ENCODE measurements at regions of chr18 and their contacts with region 1.

Region 1: GRCh38 chr18:35513181-35513936 is 15.6 kb upstream of the INO80C start:
- H3K4me3 ChIP-seq: no peak overlapping the region
- H3K27ac ChIP-seq: no peak overlapping the region
- H3K4me1 ChIP-seq: no peaks in the 10 kb centered on the region
- CTCF ChIP-seq: no peak

Region 2: DNA sequence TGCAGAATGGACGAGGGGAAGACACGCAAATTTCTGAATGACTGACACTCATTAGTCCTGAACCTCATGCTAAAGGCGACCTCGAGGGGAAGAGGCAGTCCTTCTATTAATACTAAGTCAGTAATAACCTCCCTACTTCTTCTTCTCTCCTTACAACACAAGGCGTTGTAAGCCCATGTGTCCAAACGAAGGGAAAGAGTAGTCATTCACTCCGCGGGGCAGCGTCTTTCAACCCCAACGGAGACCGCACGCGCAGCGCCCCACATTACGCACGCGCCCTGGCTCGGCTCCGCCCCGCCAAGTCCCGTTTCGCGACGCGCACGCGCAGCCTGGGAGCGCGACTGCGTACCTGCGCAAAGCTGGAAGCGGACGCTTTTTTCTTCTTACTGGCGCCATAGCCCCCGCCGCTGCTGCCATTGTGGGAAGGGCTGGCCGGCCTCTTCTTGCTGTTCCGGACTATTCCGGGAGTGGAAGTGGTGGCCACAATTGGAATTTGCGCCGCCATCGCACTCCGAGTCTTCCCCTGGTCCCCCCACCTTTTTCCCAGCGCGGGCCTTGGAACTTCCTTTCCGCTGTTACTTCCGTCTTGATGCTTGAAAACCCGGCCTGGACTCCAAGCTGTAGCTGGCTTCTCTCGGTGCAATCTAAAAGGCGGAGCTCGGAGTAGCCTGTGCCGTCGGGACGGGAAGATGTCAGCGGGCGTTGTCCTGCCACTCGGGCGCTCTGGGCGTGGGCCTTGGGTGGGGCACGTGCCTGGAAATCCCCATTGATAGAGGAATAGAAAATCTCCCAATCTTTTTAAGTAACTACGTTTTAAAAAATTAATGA is 15.8 kb before region 1 on chr18 and contains the start of gene INO80C:
- CTCF ChIA-PET with region 1: no interaction called
- POLR2A ChIA-PET with region 1: interaction called, 10 read pairs
- H3K4me3 ChIP-seq: peak within 1 kb of the TSS; percentile 70
- H3K27ac ChIP-seq: peak within 1 kb of the TSS; percentile 68
- H3K4me1 ChIP-seq: no peaks in the 10 kb centered on the region
- CTCF ChIP-seq: peak; percentile 19; the same call in 1 of the 2 replicates

Region 3: DNA sequence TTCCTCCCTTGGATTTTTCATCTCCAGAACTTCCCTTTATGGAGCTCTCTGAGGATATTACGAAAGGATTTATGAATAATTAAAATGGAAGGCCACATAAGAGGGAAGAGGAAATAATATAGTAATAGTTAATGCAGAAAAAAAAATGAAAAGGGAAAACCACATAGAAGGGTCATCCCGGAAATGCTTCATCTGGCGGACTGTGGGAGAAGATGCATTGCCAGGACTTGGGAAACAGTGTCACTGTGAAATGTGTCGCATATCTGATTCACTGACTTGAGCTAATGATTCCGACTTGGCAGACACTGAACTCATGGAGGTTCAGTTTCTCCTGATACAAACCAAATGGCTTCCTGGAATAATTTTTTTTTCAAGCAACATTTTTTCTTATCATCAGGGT is 329.2 kb after region 1 on chr18:
- CTCF ChIA-PET with region 1: no interaction called
- POLR2A ChIA-PET with region 1: no interaction called
- H3K4me3 ChIP-seq: no peak overlapping the region
- H3K27ac ChIP-seq: no peak overlapping the region
- H3K4me1 ChIP-seq: no peaks in the 10 kb centered on the region
- CTCF ChIP-seq: no peak